CD4-positive, alpha-beta T cell (primary cell): ENCODE measurements at regions of chr1 and their contacts with region 1.

Region 1: DNA sequence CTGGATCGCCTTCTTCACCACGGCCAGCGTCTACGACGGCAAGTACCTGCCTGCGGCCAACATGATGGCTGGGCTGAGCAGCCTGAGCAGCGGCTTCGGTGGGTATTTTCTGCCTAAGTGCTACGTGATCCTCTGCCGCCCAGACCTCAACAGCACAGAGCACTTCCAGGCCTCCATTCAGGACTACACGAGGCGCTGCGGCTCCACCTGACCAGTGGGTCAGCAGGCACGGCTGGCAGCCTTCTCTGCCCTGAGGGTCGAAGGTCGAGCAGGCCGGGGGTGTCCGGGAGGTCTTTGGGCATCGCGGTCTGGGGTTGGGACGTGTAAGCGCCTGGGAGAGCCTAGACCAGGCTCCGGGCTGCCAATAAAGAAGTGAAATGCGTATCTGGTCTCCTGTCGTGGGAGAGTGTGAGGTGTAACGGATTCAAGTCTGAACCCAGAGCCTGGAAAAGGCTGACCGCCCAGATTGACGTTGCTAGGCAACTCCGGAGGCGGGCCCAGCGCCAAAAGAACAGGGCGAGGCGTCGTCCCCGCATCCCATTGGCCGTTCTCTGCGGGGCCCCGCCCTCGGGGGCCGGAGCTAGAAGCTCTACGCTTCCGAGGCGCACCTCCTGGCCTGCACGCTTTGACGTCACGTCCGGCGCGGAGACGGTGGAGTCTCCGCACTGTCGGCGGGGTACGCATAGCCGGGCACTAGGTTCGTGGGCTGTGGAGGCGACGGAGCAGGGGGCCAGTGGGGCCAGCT is at the start of gene ZBTB48:
- DNase-seq: peak; percentile 91 to 99 (median 96)
- ATAC-seq: peak; percentile 99
- H3K4me3 ChIP-seq: peak within 1 kb of the TSS; percentile 87
- H3K4me3 Mint-ChIP-seq: peak within 1 kb of the TSS; percentile 98
- H3K27ac ChIP-seq: peak within 1 kb of the TSS; percentile 79 to 82
- H3K27ac Mint-ChIP-seq: peak within 1 kb of the TSS; percentile 93
- H3K4me1 ChIP-seq: peaks cover 36% of the 10 kb centered on the region
- H3K4me1 Mint-ChIP-seq: peaks cover 34% of the 10 kb centered on the region
- H3K27me3 ChIP-seq: peaks cover 0 to 3% of the 10 kb centered on the region in 2 experiments
- H3K27me3 Mint-ChIP-seq: no peaks in the 10 kb centered on the region
- CTCF ChIP-seq: no peak
- total RNA-seq, gene ZBTB48: 31.4 to 31.7 TPM

Region 2: GRCh38 chr1:6485168-6486101 is 94.1 kb before region 1 on chr1:
- CTCF ChIA-PET with region 1: no interaction called
- POLR2A ChIA-PET with region 1: no interaction called
- intact Hi-C with region 1: no loop called
- DNase-seq: peak in 1 of 14 experiments; percentile 48
- ATAC-seq: no peak
- H3K4me3 ChIP-seq: no peak overlapping the region
- H3K4me3 Mint-ChIP-seq: no peak overlapping the region
- H3K27ac ChIP-seq: no peak overlapping the region
- H3K27ac Mint-ChIP-seq: no peak overlapping the region
- H3K4me1 ChIP-seq: peaks cover 33% of the 10 kb centered on the region
- H3K4me1 Mint-ChIP-seq: peaks cover 7% of the 10 kb centered on the region
- H3K27me3 ChIP-seq: peaks cover 19 to 21% of the 10 kb centered on the region in 2 experiments
- H3K27me3 Mint-ChIP-seq: peaks cover 39% of the 10 kb centered on the region
- CTCF ChIP-seq: no peak

Region 3: DNA sequence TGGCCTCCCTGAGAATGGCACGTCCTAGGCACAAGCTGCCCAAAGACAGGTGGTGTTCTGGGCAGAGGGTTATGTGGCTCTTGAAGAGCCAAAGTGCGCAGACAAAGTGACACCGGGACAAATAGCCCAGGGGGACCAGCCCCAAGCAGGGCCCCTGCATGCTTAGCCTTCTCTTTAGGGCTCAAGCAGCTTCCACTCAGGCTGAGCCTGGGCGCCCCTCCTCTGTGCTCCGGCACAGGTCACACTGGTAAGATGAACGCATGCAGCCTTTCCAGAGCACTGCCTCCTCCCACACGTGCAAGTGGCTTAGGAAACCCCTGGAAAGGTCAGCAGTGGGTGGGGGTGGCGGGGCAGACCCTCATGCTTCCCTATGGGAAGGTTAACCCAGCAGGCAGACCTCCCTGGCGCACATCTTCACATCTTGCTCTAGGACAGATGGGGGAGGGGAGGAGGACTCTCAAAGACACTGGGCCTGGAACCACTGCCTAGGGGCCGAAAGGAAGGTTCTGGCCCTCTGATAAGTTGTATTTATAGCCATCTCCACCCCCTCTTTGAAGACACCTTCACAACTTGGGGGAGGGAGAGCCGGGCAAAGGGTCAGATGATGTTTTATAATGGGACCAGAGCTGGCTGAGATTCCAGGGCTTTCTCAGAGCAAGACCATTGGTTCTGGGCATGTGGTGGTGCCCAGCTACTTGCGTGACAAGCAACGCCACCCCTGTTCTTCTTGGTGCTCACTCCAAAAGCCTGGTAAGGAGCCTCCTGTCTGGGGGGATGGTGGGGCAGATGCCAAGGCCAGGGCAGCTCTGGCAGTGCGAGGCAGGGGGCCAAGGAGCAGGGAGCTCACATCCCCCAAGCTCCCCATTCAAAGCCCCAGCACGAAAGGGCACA is 17.6 kb after region 1 on chr1:
- CTCF ChIA-PET with region 1: interaction called, 4 read pairs
- POLR2A ChIA-PET with region 1: interaction called, 139 read pairs
- intact Hi-C with region 1: loop called (anchors 1 to 2 kb)
- DNase-seq: peak in 1 of 14 experiments; percentile 9
- ATAC-seq: no peak
- H3K4me3 ChIP-seq: no peak overlapping the region
- H3K4me3 Mint-ChIP-seq: peak overlapping the region; percentile 56
- H3K27ac ChIP-seq: no peak overlapping the region
- H3K27ac Mint-ChIP-seq: peak overlapping the region; percentile 56
- H3K4me1 ChIP-seq: peaks cover 76% of the 10 kb centered on the region
- H3K4me1 Mint-ChIP-seq: peaks cover 52% of the 10 kb centered on the region
- H3K27me3 ChIP-seq: no peaks in the 10 kb centered on the region
- H3K27me3 Mint-ChIP-seq: no peaks in the 10 kb centered on the region
- CTCF ChIP-seq: no peak

Region 4: DNA sequence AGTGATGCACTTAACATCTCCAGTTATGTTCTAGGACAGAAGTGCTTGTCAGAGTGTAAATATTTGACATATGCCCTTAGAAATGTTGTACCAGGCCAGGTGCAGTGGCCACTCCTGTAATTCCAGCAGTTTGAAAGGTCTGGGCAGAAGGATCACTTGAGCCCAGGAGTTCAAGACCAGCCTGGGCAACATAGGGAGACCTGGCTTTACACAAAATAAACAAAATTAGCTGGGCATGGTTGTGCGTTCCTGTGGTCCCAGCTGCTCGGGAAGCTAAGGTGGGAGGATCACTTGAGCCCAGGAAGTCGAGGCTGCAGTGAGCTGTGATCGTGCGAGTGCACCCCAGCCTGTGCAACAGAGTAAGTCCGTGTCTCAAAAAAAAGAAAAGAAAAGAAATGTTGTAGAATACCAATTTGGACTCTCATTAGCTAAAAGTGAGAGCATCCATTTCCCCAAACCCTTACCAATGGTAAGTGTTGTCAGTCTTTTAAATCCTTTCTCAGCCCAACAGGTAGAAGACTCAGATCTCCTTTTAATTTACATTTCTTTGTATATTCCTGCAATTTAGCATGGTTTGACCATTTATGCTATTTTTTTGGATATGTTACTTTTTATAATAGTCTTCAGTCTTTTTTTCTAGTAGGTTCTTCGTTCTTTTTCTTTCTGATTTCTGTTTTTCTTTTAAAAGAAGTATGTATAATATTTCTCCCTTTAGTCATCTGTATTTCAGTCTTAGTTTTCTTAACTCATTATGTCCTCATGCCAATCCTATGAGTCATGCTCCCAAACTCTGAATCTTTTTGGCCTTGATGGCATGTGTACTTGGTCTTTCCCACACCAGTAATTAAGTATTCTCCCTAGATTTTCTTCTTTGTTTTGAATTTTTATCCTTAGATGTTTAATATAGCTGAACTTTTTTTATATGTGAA is 280.1 kb after region 1 on chr1:
- CTCF ChIA-PET with region 1: no interaction called
- POLR2A ChIA-PET with region 1: no interaction called
- intact Hi-C with region 1: no loop called
- DNase-seq: no peak
- ATAC-seq: no peak
- H3K4me3 ChIP-seq: no peak overlapping the region
- H3K4me3 Mint-ChIP-seq: no peak overlapping the region
- H3K27ac ChIP-seq: no peak overlapping the region
- H3K27ac Mint-ChIP-seq: no peak overlapping the region
- H3K4me1 ChIP-seq: no peaks in the 10 kb centered on the region
- H3K4me1 Mint-ChIP-seq: peaks cover 20% of the 10 kb centered on the region
- H3K27me3 ChIP-seq: no peaks in the 10 kb centered on the region
- H3K27me3 Mint-ChIP-seq: no peaks in the 10 kb centered on the region
- CTCF ChIP-seq: no peak